ENCODE measurements at regions of chr20 and their contacts with region 1.

Region 1: GRCh38 chr20:45311589-45312211 is 3.6 kb upstream of the MATN4 start:
- DNase-seq: no peak
- ATAC-seq: no peak
- H3K4me3 ChIP-seq: no peak overlapping the region
- H3K27ac ChIP-seq: no peak overlapping the region
- H3K4me1 ChIP-seq: peaks cover 0 to 5% of the 10 kb centered on the region in 2 donors
- H3K27me3 ChIP-seq: peaks cover 6 to 20% (median 13%) of the 10 kb centered on the region in 3 donors
- CTCF ChIP-seq: peak; percentile 35 to 82 (median 69)
- POLR2A ChIP-seq: no peak

Region 2: DNA sequence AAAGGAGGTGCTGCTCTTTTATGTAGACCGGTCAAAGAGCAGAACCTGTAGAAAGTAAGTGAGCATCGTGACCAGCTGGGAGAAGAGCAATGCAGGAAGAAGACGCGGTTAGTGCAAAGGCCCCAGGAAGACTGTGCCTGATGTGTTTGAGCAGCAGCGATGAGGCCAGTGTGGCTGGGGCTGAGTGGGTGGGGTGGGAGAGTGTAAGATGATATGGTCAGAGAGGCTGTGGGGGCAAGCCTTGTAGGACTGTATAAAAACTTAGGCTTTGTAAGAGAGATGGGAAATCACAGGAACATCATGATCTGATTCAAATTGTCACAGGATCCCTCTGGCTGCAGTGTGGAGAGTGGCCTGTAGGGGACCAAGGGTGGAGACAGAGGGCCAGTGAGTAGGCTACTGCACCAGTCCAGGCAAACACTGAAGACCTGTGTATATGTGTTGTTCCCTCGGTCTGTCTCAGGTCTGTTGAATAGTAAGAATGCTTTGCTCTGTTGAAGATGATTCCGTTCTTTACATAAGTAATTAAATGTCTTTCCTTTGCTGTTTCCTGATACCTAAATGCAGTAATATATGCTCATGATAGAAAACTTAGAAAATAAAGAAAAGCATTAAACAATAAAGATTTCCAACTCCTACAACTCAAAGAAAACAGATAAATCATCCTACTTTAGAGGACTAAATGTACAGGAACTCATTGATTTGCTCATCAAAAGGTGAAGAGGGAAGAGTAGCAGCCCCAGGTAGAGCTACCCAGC is 134.3 kb after region 1 on chr20:
- in situ Hi-C with region 1: loop called in 1 of 4 experiments (anchors 10 kb)
- intact Hi-C with region 1: no loop called
- DNase-seq: no peak
- ATAC-seq: no peak
- H3K4me3 ChIP-seq: no peak overlapping the region
- H3K27ac ChIP-seq: no peak overlapping the region
- H3K4me1 ChIP-seq: peaks cover 0 to 15% of the 10 kb centered on the region in 2 donors
- H3K27me3 ChIP-seq: peaks cover 0 to 3% (median 0%) of the 10 kb centered on the region in 3 donors
- CTCF ChIP-seq: peak in 1 of 5 experiments; percentile 38
- POLR2A ChIP-seq: no peak

Measured in gastrocnemius medialis (tissue), 4 donors.